B cell (primary cell): ENCODE measurements at regions of chr3 and their contacts with region 1.

Region 1: GRCh38 chr3:71583566-71584449 is at the start of gene FOXP1:
- DNase-seq: peak; percentile 90
- ATAC-seq: peak; percentile 26
- H3K4me3 ChIP-seq: peak within 1 kb of the TSS; percentile 80 to 97 (median 92)
- H3K4me3 Mint-ChIP-seq: peak within 1 kb of the TSS; percentile 96
- H3K27ac ChIP-seq: peak within 1 kb of the TSS; percentile 90 to 97
- H3K27ac Mint-ChIP-seq: peak within 1 kb of the TSS; percentile 97
- H3K4me1 ChIP-seq: peaks cover 19 to 42% of the 10 kb centered on the region in 2 donors
- H3K4me1 Mint-ChIP-seq: peaks cover 44% of the 10 kb centered on the region
- H3K27me3 ChIP-seq: peaks cover 0 to 9% (median 4%) of the 10 kb centered on the region in 4 experiments
- H3K27me3 Mint-ChIP-seq: peaks cover 3% of the 10 kb centered on the region
- CTCF ChIP-seq: no peak
- total RNA-seq, gene FOXP1: 508 and 530 TPM in 2 replicates

Region 2: DNA sequence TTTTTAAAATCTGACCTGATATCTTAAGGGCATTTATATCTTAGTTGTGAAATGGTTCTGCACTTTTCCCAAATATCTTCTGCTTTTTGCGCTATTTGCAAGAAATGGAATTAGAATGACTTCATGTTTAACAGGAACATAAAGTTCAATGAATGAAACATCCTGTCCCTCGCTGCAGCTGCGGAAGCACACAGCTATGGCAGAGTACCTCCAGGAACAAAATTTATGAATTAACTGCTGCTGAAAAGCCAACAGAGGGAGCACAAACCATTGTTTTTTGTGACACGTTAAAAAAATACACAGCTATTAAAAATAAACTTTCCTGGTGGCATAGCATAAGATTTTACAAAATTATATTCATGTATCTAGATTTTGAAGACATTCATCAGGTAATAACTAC is 867.0 kb before region 1 on chr3:
- CTCF ChIA-PET with region 1: interaction called, 3 read pairs
- POLR2A ChIA-PET with region 1: no interaction called
- intact Hi-C with region 1: loop called (anchors 2 kb)
- DNase-seq: no peak
- ATAC-seq: no peak
- H3K4me3 ChIP-seq: no peak overlapping the region
- H3K4me3 Mint-ChIP-seq: no peak overlapping the region
- H3K27ac ChIP-seq: no peak overlapping the region
- H3K27ac Mint-ChIP-seq: no peak overlapping the region
- H3K4me1 ChIP-seq: no peaks in the 10 kb centered on the region
- H3K4me1 Mint-ChIP-seq: no peaks in the 10 kb centered on the region
- H3K27me3 ChIP-seq: peaks cover 0 to 3% (median 0%) of the 10 kb centered on the region in 4 experiments
- H3K27me3 Mint-ChIP-seq: peaks cover 20% of the 10 kb centered on the region
- CTCF ChIP-seq: no peak

Region 3: DNA sequence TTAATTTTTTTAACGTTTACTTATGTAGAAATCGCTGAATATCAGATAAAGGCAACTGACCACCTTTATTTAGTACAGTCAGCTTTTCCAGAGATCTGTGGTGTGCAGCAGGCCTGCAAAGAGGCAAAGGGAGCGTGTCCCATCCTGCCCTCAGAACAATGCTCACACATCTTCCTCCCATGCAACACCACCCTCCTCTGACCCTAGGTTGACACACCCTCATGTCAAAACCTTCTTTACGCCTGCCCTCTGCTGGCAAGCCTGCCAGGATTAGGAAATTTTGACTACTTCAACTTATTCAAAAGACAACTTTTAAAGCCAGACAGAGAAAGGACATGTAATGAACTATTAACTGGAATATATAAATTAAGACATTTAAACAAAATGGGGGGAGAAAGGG is 514.0 kb before region 1 on chr3:
- CTCF ChIA-PET with region 1: interaction called, 7 read pairs
- POLR2A ChIA-PET with region 1: interaction called, 19 read pairs
- intact Hi-C with region 1: loop called (anchors 1 kb)
- DNase-seq: peak; percentile 83
- ATAC-seq: peak; percentile 48
- H3K4me3 ChIP-seq: no peak overlapping the region
- H3K4me3 Mint-ChIP-seq: peak overlapping the region; percentile 69
- H3K27ac ChIP-seq: peak overlapping the region; percentile 25 to 77
- H3K27ac Mint-ChIP-seq: peak overlapping the region; percentile 84
- H3K4me1 ChIP-seq: peaks cover 55 to 67% of the 10 kb centered on the region in 2 donors
- H3K4me1 Mint-ChIP-seq: peaks cover 79% of the 10 kb centered on the region
- H3K27me3 ChIP-seq: no peaks in the 10 kb centered on the region
- H3K27me3 Mint-ChIP-seq: no peaks in the 10 kb centered on the region
- CTCF ChIP-seq: peak; percentile 78

Region 4: DNA sequence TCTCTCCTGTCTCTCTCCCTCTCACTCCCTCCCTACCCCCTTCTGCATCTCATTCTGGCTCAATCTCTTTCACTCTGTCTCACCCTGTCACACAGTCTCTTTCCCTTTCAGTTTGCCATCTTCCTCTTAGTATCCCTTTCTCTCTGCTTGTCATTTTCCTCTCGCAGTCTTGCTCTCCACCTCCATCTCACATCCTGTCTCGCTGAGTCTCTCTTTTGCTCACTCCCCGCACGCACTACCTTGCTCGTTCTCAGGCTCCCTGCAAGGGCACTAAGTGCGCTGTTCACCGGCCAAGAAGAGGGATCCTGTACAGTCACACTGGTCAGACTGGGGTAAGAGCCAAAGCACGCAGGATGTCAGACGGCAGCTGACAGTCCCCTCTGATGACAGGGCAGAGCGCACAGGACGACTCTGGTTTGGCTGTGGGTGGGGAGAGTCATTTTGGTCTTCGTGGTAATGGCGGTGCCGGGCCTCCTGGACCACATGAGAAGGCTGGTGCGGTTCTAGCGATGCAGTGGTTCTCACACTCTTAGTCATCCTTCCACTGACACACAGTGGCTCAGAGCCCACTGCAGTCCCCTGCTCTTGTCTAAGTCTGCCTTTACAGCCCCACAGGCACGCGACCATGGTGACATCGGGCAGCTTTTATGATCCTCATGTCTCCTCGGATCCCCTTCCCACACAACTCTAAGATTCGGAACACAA is 357.1 kb before region 1 on chr3:
- CTCF ChIA-PET with region 1: no interaction called
- POLR2A ChIA-PET with region 1: no interaction called
- intact Hi-C with region 1: loop called (anchors 10 kb)
- DNase-seq: peak; percentile 60
- ATAC-seq: peak; percentile 69
- H3K4me3 ChIP-seq: peak overlapping the region in 4 of 5 experiments; percentile 19 to 52 (median 40)
- H3K4me3 Mint-ChIP-seq: peak overlapping the region; percentile 91
- H3K27ac ChIP-seq: peak overlapping the region; percentile 67 to 93
- H3K27ac Mint-ChIP-seq: peak overlapping the region; percentile 90
- H3K4me1 ChIP-seq: peaks cover 32 to 34% of the 10 kb centered on the region in 2 donors
- H3K4me1 Mint-ChIP-seq: peaks cover 64% of the 10 kb centered on the region
- H3K27me3 ChIP-seq: no peaks in the 10 kb centered on the region
- H3K27me3 Mint-ChIP-seq: no peaks in the 10 kb centered on the region
- CTCF ChIP-seq: no peak

Region 5: GRCh38 chr3:71389911-71390573 is 193.8 kb before region 1 on chr3:
- CTCF ChIA-PET with region 1: no interaction called
- POLR2A ChIA-PET with region 1: interaction called, 5 read pairs
- intact Hi-C with region 1: loop called (anchors 2 kb)
- DNase-seq: peak; percentile 57
- ATAC-seq: peak; percentile 11
- H3K4me3 ChIP-seq: peak overlapping the region; percentile 27 to 40 (median 33)
- H3K4me3 Mint-ChIP-seq: peak overlapping the region; percentile 84
- H3K27ac ChIP-seq: peak overlapping the region; percentile 95 to 99
- H3K27ac Mint-ChIP-seq: peak overlapping the region; percentile 98
- H3K4me1 ChIP-seq: peaks cover 84 to 90% of the 10 kb centered on the region in 2 donors
- H3K4me1 Mint-ChIP-seq: peaks cover 70% of the 10 kb centered on the region
- H3K27me3 ChIP-seq: no peaks in the 10 kb centered on the region
- H3K27me3 Mint-ChIP-seq: no peaks in the 10 kb centered on the region
- CTCF ChIP-seq: no peak

Region 6: DNA sequence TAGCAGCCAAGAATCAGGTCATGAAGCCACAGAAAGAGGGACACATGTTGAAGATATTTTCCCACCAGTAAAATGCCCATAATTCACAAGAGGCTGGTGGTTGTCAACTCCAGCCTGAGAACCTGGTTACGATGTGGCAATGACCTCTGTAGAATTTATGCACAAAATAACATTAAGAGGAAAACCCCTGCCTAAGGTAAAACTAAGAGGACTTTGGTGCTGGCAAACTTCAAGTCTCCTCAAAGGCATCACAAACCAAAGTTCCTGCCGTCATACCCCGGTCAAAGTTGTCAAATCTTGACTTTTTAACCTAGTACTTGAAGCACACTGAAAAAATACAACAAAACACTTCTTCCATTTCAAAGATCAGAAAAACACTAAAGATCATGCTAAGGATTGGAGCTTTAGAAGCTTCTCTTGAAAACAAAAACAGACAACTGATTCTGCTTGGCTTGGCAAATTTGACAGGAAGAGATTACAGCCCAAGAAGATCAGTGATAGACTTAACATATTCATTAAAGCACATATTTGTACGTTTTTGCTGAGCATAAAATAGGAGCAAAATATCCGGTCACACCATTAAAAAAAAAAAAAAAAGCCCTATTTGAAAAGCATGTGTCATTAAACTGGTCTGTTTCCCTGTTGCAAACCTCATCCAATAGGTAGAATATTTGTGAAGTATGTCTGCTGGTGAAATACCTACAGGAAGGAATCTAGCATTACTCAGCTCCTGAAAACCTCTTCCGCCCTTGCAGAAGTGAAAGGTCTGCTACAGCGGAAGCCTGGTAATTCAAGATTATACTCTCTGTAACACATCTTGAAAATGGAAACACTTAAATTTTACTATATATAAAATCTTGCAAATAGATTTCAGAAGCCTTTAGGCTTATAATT is 118.6 kb after region 1 on chr3:
- CTCF ChIA-PET with region 1: no interaction called
- POLR2A ChIA-PET with region 1: no interaction called
- intact Hi-C with region 1: no loop called
- DNase-seq: no peak
- ATAC-seq: no peak
- H3K4me3 ChIP-seq: no peak overlapping the region
- H3K4me3 Mint-ChIP-seq: no peak overlapping the region
- H3K27ac ChIP-seq: no peak overlapping the region
- H3K27ac Mint-ChIP-seq: no peak overlapping the region
- H3K4me1 ChIP-seq: peaks cover 0 to 5% of the 10 kb centered on the region in 2 donors
- H3K4me1 Mint-ChIP-seq: peaks cover 6% of the 10 kb centered on the region
- H3K27me3 ChIP-seq: no peaks in the 10 kb centered on the region
- H3K27me3 Mint-ChIP-seq: no peaks in the 10 kb centered on the region
- CTCF ChIP-seq: no peak

Region 7: GRCh38 chr3:71786551-71786950 is 202.7 kb after region 1 on chr3:
- CTCF ChIA-PET with region 1: no interaction called
- POLR2A ChIA-PET with region 1: no interaction called
- intact Hi-C with region 1: no loop called
- DNase-seq: no peak
- ATAC-seq: no peak
- H3K4me3 ChIP-seq: no peak overlapping the region
- H3K4me3 Mint-ChIP-seq: no peak overlapping the region
- H3K27ac ChIP-seq: no peak overlapping the region
- H3K27ac Mint-ChIP-seq: no peak overlapping the region
- H3K4me1 ChIP-seq: peaks cover 12 to 14% of the 10 kb centered on the region in 2 donors
- H3K4me1 Mint-ChIP-seq: peaks cover 19% of the 10 kb centered on the region
- H3K27me3 ChIP-seq: peaks cover 0 to 22% (median 15%) of the 10 kb centered on the region in 4 experiments
- H3K27me3 Mint-ChIP-seq: peaks cover 62% of the 10 kb centered on the region
- CTCF ChIP-seq: no peak